Aorta (tissue), 5 donors: ENCODE measurements at regions of chr19 and their contacts with region 1.

Region 1: DNA sequence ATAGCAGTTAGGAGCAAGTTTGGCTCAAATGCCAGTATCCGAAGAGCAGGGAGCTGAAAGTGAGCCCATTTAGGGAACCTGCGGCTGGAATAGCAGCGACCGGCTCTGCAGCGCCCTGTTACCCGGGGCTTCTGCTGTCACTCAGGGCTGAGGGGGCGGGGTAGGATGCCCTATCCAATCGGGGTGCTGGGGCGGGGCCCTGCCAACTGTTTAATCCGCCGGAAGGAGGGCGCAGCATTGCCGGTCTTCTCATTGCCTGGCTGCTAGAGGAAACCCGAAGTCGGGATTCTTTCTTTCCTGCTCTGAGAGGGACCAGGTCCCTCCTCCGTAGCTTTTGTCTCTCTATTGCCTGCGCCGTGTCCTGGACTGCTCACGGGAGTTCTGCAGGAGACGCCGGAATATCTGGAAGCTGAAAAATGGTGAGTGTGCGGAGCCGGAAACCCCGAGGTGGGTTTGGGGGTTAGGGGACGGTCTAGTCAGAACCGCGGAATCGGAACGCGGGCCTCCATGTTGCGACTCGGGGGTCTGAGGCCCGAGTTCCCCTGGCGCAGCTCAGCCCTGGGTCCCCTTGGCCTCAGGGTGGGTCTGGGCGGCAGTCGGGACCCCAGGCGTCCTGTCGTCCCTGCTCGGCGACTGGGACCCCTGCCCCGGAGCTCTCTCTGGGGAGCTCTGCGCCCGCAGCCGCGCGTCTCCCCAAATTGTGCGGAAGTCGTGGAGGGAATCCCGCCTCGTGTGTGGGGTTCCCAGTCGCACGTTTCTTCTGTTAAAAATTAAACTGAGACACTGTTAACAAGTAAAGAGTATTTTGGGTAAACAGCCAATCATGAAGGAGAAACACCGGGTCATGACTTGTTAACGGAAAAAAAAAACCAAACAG is 22.8 kb downstream of the ZNF763 start:
- DNase-seq: peak; percentile 99
- ATAC-seq: peak; percentile 99
- H3K4me3 ChIP-seq: peak overlapping the region; percentile 55 to 83
- H3K27ac ChIP-seq: peak overlapping the region in 1 of 2 donors; percentile 46
- H3K4me1 ChIP-seq: no peaks in the 10 kb centered on the region
- H3K27me3 ChIP-seq: no peaks in the 10 kb centered on the region

Region 2: DNA sequence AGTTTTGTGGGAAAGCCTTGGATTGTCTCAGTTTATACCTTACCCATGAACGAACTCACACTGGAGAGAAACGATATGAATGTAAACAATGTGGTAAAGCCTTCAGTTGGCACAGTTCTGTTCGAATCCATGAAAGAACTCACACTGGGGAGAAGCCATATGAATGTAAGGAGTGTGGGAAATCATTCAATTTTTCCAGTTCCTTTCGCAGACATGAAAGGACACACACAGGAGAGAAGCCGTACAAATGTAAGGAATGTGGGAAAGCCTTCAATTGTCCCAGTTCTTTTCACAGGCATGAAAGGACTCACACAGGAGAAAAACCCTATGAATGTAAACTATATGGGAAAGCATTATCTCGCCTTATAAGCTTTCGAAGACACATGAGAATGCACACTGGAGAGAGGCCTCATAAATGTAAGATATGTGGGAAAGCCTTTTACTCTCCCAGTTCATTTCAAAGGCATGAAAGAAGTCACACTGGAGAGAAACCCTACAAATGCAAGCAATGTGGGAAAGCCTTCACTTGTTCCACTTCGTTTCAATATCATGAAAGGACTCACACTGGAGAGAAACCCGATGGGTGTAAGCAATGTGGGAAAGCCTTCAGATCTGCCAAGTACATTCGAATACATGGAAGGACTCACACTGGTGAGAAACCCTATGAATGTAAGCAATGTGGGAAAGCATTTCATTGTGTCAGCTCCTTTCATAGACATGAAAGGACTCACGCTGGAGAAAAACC is 181.1 kb before region 1 on chr19:
- intact Hi-C with region 1: no loop called
- DNase-seq: no peak
- ATAC-seq: no peak
- H3K4me3 ChIP-seq: peak overlapping the region in 1 of 2 donors; percentile 20
- H3K27ac ChIP-seq: no peak overlapping the region
- H3K4me1 ChIP-seq: no peaks in the 10 kb centered on the region
- H3K27me3 ChIP-seq: no peaks in the 10 kb centered on the region

Region 3: DNA sequence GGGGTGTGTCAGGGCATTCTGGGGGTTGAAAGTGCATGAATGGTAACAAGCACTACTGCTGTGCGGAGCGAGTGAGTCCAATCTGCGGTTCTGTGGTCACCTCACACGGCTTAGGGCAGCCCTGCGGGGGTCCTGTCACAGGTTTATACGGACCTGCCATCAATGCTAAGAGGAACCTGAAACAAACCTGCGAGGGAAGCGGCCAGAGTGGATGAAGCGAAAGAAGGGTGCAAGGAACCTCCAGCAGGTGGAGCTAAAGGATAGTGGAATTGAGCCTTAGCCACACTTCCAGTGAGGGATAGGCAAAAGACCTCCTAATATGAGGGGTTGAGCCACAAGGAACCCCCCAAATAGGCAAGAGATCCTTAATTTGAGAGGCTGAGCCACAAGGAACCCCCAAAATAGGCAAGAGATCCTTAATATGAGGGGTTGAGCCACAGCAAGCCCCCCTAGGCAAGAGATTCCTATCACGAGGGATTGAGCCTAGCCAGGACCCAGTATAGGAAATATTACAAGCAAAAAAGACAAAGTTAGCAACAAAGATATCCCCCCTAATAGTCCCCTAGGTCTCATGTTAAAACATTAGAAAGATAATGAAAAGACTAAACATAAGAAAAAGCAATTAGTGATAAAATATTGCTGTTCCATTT is 106.4 kb before region 1 on chr19:
- intact Hi-C with region 1: loop called (anchors 5 kb)
- DNase-seq: peak; percentile 50 to 69
- ATAC-seq: peak; percentile 56
- H3K4me3 ChIP-seq: no peak overlapping the region
- H3K27ac ChIP-seq: no peak overlapping the region
- H3K4me1 ChIP-seq: no peaks in the 10 kb centered on the region
- H3K27me3 ChIP-seq: no peaks in the 10 kb centered on the region

Region 4: DNA sequence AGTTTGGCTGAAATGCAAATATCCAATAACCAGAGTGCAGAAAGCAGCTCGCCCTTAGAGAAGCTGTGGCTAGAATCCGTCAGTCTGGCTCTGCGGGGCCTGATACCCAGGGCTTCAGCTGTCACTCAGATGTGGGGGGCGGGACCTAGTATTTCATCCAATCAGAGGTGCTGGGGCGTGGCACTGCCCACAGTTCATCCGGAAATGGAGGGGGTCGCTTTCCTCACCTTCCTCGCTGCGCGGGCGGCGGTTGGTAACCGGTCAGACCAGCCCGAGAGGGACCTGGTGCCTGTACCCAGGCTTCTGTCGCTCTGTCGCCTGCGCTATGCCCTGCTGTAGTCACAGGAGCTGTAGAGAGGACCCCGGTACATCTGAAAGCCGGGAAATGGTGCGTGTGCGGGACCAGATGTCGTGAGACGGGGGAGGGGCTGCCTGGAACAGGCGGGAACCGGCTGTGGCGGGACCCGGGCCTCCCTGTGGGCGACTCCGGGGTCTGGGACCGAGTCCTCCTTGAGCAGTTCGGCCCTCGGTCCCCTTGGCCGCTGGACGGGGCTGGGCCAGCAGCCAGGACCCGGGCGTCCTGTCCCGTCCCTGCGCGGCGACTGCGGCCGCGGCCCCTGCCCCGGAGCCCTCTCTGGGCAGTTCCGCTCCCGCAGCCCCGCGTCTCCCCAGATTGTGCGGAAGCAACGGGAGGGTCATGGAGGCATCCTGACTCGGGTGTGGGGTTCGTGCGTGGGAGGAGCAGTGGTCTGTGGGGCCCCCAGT is 62.6 kb before region 1 on chr19 and contains the start of gene ZNF700:
- intact Hi-C with region 1: loop called (anchors 2 kb)
- DNase-seq: peak; percentile 95 to 97
- ATAC-seq: peak; percentile 98
- H3K4me3 ChIP-seq: peak within 1 kb of the TSS; percentile 42 to 79
- H3K27ac ChIP-seq: peak within 1 kb of the TSS in 1 of 2 donors; percentile 49
- H3K4me1 ChIP-seq: peaks cover 0 to 2% of the 10 kb centered on the region in 2 donors
- H3K27me3 ChIP-seq: no peaks in the 10 kb centered on the region
- total RNA-seq, gene ZNF700: 11.6 to 19.2 TPM

Region 5: GRCh38 chr19:11964858-11965645 is 22.6 kb before region 1 on chr19 and contains the start of gene ZNF763:
- intact Hi-C with region 1: loop called in 1 of 2 experiments (anchors 1 kb)
- DNase-seq: peak; percentile 96 to 97
- ATAC-seq: peak; percentile 97
- H3K4me3 ChIP-seq: peak within 1 kb of the TSS; percentile 23 to 68
- H3K27ac ChIP-seq: peak within 1 kb of the TSS; percentile 29 to 50
- H3K4me1 ChIP-seq: no peaks in the 10 kb centered on the region
- H3K27me3 ChIP-seq: no peaks in the 10 kb centered on the region
- total RNA-seq, gene ZNF763: 1.9 to 5.1 TPM

Region 6: DNA sequence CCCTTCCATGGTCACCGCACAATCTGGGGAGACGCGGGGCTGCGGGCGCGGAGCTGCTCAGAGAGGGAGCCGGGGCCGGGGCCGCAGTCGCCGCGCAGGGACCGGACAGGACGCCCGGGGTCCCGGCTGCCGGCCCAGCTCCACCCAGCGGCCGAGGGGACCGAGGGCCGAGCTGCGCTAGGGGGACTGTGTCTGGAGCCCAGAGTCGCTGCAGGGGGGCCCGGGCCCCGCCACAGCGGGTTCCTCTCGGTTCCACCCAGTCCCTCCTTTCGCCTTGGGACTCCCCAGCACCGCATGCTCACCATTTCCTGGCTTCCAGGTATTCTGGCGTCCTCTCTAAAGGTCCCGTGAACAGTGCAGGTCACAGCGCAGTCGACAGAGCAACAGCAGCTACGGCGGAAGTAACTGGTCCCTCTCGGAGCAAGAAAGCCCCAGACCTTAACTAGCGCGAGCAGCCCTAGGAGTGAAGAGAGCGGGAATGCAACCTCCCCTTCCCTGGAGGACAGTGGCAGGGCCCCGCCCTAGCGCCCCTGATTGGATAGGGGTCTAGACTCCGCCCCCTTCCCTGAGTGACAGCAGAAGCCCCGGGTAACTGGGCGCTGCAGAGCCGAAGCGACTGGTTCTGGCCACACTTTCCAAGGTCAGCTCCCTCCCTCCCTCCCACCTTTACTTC is 65.0 kb after region 1 on chr19 and contains the start of gene ZNF878:
- intact Hi-C with region 1: no loop called
- DNase-seq: peak; percentile 94 to 95
- ATAC-seq: peak; percentile 98
- H3K4me3 ChIP-seq: peak within 1 kb of the TSS; percentile 49 to 55
- H3K27ac ChIP-seq: peak within 1 kb of the TSS in 1 of 2 donors; percentile 75
- H3K4me1 ChIP-seq: no peaks in the 10 kb centered on the region
- H3K27me3 ChIP-seq: no peaks in the 10 kb centered on the region
- total RNA-seq, gene ZNF878: 0.45 TPM in 1 of 2 donors, not detected in the other